Activated naive CD4-positive, alpha-beta T cell treated with anti-CD3 and anti-CD28 coated beads for 36 hours (primary cell): ENCODE measurements at regions of chr1 and their contacts with region 1.

Region 1: GRCh38 chr1:16078925-16079656 is 5.6 kb upstream of the FAM131C start:
- DNase-seq: peak; percentile 85
- H3K4me3 Mint-ChIP-seq: peak overlapping the region; percentile 67
- H3K27ac Mint-ChIP-seq: peak overlapping the region; percentile 65
- H3K4me1 Mint-ChIP-seq: peaks cover 4% of the 10 kb centered on the region
- H3K27me3 Mint-ChIP-seq: peaks cover 4% of the 10 kb centered on the region

Region 2: GRCh38 chr1:15559294-15559761 is 519.8 kb before region 1 on chr1:
- CTCF ChIA-PET with region 1: no interaction called
- intact Hi-C with region 1: no loop called
- DNase-seq: no peak
- H3K4me3 Mint-ChIP-seq: no peak overlapping the region
- H3K27ac Mint-ChIP-seq: no peak overlapping the region
- H3K4me1 Mint-ChIP-seq: no peaks in the 10 kb centered on the region
- H3K27me3 Mint-ChIP-seq: no peaks in the 10 kb centered on the region

Region 3: GRCh38 chr1:15918962-15919715 is 160.0 kb before region 1 on chr1:
- CTCF ChIA-PET with region 1: no interaction called
- intact Hi-C with region 1: no loop called
- DNase-seq: peak; percentile 82
- H3K4me3 Mint-ChIP-seq: no peak overlapping the region
- H3K27ac Mint-ChIP-seq: no peak overlapping the region
- H3K4me1 Mint-ChIP-seq: peaks cover 43% of the 10 kb centered on the region
- H3K27me3 Mint-ChIP-seq: no peaks in the 10 kb centered on the region

Region 4: DNA sequence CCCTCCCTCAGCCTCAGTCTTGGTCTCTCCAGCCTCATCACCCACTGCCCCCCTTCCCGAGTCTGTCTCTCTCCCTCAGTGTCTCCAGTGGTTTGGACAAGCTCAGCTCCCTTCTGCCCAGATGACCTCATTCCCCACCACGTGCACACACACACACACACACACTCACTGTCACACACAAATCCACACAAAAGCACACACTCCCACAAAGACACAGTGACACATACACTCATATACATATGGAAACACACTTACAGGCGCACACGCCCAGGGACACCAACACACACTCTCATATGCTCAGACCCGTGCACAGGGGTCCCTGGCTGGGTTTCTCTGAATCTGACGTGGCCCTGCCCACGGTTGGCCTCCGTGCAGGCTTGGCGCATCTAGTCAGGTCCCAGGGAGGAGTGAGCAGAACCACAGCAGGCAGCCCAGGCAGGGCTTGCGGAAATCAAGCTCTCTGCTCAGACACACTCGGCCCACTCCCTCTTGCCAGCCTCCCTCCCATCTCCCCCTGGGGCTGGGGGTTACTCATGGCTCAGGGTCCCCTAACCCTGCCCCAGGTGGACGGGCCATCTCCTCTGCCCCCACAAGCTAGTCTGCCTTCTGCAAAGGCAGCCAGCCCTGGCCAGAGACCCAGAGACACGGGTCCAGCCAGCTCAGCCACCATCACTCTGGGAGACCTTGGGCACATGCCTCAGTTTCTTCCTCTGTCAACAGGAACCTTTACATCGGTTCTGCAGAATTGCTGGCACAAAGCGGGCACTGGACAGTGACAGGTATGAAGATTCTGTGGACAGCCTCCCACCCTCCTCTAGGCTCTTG is 32.9 kb after region 1 on chr1:
- CTCF ChIA-PET with region 1: interaction called, 10 read pairs
- intact Hi-C with region 1: no loop called
- DNase-seq: no peak
- H3K4me3 Mint-ChIP-seq: no peak overlapping the region
- H3K27ac Mint-ChIP-seq: no peak overlapping the region
- H3K4me1 Mint-ChIP-seq: no peaks in the 10 kb centered on the region
- H3K27me3 Mint-ChIP-seq: peaks cover 6% of the 10 kb centered on the region

Region 5: GRCh38 chr1:16167331-16168143 is 88.4 kb after region 1 on chr1:
- CTCF ChIA-PET with region 1: interaction called, 10 read pairs
- intact Hi-C with region 1: no loop called
- DNase-seq: peak; percentile 76
- H3K4me3 Mint-ChIP-seq: peak overlapping the region; percentile 60
- H3K27ac Mint-ChIP-seq: no peak overlapping the region
- H3K4me1 Mint-ChIP-seq: peaks cover 50% of the 10 kb centered on the region
- H3K27me3 Mint-ChIP-seq: no peaks in the 10 kb centered on the region

Region 6: DNA sequence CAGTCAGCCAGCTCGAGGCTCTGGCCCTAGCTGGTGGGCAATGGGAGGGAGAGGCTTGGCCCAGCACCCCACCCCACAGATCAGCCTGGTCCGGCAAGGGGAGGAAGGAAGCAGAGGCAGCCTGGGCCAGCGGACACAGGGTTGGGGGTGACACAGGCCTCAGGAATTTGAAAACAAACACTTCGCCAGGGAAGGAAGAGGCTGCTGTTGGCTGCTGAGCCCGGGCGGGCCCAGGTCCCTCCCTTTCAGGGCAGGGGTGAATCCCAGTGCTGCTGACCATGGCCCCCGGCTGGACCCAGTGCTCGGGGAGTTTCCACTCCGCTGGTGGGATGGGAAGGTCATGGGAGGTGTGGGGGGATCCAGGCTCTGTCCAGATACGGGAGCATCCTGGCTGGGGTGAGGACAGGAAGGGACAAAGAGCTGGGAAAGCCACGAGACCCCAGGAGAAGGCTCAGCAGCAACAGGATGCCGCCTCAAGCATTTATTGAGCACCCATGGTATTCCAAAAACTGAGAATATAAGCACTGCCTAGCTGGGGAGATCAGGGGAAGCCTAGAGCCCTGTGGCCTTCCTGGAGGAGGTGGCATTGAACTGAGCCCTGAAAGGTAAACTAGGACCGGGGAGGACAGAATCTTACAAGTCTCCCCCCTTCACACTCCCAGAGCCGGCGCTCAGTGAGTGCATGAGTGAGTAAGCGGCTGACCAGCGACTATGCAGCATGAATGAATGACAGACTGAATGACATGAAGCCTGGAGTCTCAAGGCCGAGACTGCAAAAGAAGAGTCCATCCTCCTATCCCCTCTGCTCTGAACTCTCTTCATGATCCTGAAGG is 103.0 kb after region 1 on chr1:
- CTCF ChIA-PET with region 1: interaction called, 243 read pairs
- intact Hi-C with region 1: loop called (anchors 1 kb)
- DNase-seq: no peak
- H3K4me3 Mint-ChIP-seq: no peak overlapping the region
- H3K27ac Mint-ChIP-seq: no peak overlapping the region
- H3K4me1 Mint-ChIP-seq: no peaks in the 10 kb centered on the region
- H3K27me3 Mint-ChIP-seq: no peaks in the 10 kb centered on the region

Region 7: GRCh38 chr1:16187748-16188401 is 108.8 kb after region 1 on chr1:
- CTCF ChIA-PET with region 1: interaction called, 243 read pairs
- intact Hi-C with region 1: loop called (anchors 1 kb)
- DNase-seq: peak; percentile 81
- H3K4me3 Mint-ChIP-seq: no peak overlapping the region
- H3K27ac Mint-ChIP-seq: no peak overlapping the region
- H3K4me1 Mint-ChIP-seq: no peaks in the 10 kb centered on the region
- H3K27me3 Mint-ChIP-seq: no peaks in the 10 kb centered on the region

Region 8: GRCh38 chr1:16243936-16244649 is 165.0 kb after region 1 on chr1:
- CTCF ChIA-PET with region 1: interaction called, 14 read pairs
- intact Hi-C with region 1: loop called (anchors 1 kb)
- DNase-seq: peak; percentile 91
- H3K4me3 Mint-ChIP-seq: no peak overlapping the region
- H3K27ac Mint-ChIP-seq: no peak overlapping the region
- H3K4me1 Mint-ChIP-seq: peaks cover 10% of the 10 kb centered on the region
- H3K27me3 Mint-ChIP-seq: no peaks in the 10 kb centered on the region